ENCODE measurements at regions of chr12 and their contacts with region 1.

Region 1: DNA sequence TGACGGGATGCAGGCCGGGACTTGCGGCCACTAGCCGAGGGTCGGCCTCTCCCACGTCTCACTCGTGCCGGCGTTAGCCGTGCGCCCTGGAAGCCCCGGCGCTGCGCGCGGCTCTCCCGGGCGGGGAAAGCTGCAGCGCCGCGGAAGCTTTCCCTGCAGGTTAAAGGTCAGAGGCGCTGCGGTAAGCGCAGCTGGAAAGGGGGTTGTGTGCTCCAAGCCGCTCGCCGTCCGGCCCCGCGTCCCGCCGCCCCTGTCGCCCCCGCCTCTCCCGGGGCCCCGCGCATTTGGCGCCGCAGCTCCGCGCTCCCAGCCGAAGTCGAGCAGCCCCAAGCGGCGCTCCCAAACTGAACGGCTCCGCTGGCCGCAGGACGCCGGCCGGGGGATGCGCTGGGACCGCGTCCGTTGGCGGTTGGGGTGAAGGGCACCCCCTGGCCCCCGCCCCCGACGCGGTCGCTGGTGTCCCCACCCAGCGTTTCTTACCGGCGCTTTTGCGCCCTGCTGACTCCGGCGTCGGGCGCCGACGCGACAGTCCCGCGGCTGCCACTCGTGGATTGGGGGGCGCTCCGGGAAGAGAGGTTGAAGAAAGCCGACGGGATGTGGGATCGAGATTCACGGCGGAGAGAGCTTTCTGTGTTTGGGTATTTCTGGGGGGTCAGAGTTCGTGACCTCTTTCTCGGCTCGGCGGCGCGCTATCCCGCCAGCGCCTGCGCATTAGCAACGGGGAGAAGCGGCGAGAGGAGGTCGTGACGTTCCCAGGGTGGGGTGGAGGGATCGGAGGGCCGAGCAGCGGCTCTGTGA is at the start of gene NR2C1:
- DNase-seq: peak; percentile 85 to 97 (median 90)
- ATAC-seq: peak; percentile 98
- H3K4me3 ChIP-seq: peak within 1 kb of the TSS; percentile 84
- H3K4me3 Mint-ChIP-seq: peak within 1 kb of the TSS; percentile 98
- H3K27ac ChIP-seq: peak within 1 kb of the TSS; percentile 62 to 72
- H3K27ac Mint-ChIP-seq: peak within 1 kb of the TSS; percentile 89
- H3K4me1 ChIP-seq: peaks cover 17% of the 10 kb centered on the region
- H3K4me1 Mint-ChIP-seq: peaks cover 23% of the 10 kb centered on the region
- H3K27me3 ChIP-seq: no peaks in the 10 kb centered on the region
- H3K27me3 Mint-ChIP-seq: no peaks in the 10 kb centered on the region
- CTCF ChIP-seq: no peak
- total RNA-seq, gene NR2C1: 48.3 to 58.9 TPM

Region 2: DNA sequence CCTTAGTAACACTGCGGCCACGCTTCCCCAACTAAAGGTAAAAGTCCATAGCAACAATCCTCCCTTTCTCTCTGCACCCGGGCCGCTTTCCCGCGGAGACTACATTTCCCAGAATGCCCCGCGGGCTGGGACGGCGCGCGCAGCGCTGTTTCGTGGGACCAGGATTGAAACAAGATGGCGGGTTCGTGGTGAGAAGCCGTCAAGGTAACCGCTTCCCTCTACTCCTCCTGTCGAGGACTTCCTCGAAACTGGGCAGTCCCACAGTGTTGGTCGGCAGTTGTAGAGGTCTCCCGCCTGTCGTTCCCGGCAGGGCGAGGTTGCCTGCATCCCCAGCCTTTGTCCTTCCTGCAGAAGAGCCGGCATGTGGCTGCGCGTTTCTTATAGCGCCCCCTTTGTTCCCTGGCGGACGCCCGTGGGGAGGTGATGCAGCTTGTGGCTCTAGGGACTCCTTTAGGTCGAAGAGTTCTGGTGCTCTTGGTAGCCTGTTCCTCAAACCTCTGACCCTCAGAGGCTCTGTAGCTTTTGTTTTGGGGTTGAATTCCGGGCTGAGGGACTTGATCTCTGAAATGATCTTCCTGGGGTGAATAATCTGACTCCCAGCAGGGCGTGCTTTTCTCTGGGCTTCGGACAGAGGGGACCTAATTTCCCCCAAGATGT is 1605.6 kb before region 1 on chr12 and contains the start of gene MRPL42:
- CTCF ChIA-PET with region 1: interaction called, 3 read pairs
- POLR2A ChIA-PET with region 1: no interaction called
- intact Hi-C with region 1: loop called in 1 of 2 experiments (anchors 10 kb)
- DNase-seq: peak; percentile 84 to 94 (median 92)
- ATAC-seq: peak; percentile 95
- H3K4me3 ChIP-seq: peak within 1 kb of the TSS; percentile 92
- H3K4me3 Mint-ChIP-seq: peak within 1 kb of the TSS; percentile 92
- H3K27ac ChIP-seq: peak within 1 kb of the TSS; percentile 77 to 93
- H3K27ac Mint-ChIP-seq: peak within 1 kb of the TSS; percentile 95
- H3K4me1 ChIP-seq: peaks cover 25% of the 10 kb centered on the region
- H3K4me1 Mint-ChIP-seq: peaks cover 40% of the 10 kb centered on the region
- H3K27me3 ChIP-seq: no peaks in the 10 kb centered on the region
- H3K27me3 Mint-ChIP-seq: no peaks in the 10 kb centered on the region
- CTCF ChIP-seq: peak; percentile 82
- total RNA-seq, gene MRPL42: 39.0 to 39.3 TPM

Region 3: GRCh38 chr12:93670104-93670503 is 1403.0 kb before region 1 on chr12:
- CTCF ChIA-PET with region 1: no interaction called
- POLR2A ChIA-PET with region 1: no interaction called
- intact Hi-C with region 1: loop called in 1 of 2 experiments (anchors 5 kb)
- DNase-seq: no peak
- ATAC-seq: no peak
- H3K4me3 ChIP-seq: no peak overlapping the region
- H3K4me3 Mint-ChIP-seq: no peak overlapping the region
- H3K27ac ChIP-seq: no peak overlapping the region
- H3K27ac Mint-ChIP-seq: no peak overlapping the region
- H3K4me1 ChIP-seq: no peaks in the 10 kb centered on the region
- H3K4me1 Mint-ChIP-seq: no peaks in the 10 kb centered on the region
- H3K27me3 ChIP-seq: peaks cover 7 to 9% of the 10 kb centered on the region in 2 experiments
- H3K27me3 Mint-ChIP-seq: peaks cover 23% of the 10 kb centered on the region
- CTCF ChIP-seq: no peak

Region 4: GRCh38 chr12:94603434-94604365 is 469.4 kb before region 1 on chr12:
- CTCF ChIA-PET with region 1: no interaction called
- POLR2A ChIA-PET with region 1: no interaction called
- intact Hi-C with region 1: loop called in 1 of 2 experiments (anchors 5 kb)
- DNase-seq: peak; percentile 26 to 74 (median 40)
- ATAC-seq: no peak
- H3K4me3 ChIP-seq: no peak overlapping the region
- H3K4me3 Mint-ChIP-seq: no peak overlapping the region
- H3K27ac ChIP-seq: no peak overlapping the region
- H3K27ac Mint-ChIP-seq: no peak overlapping the region
- H3K4me1 ChIP-seq: no peaks in the 10 kb centered on the region
- H3K4me1 Mint-ChIP-seq: no peaks in the 10 kb centered on the region
- H3K27me3 ChIP-seq: peaks cover 0 to 5% of the 10 kb centered on the region in 2 experiments
- H3K27me3 Mint-ChIP-seq: peaks cover 5% of the 10 kb centered on the region
- CTCF ChIP-seq: peak; percentile 66

Region 5: DNA sequence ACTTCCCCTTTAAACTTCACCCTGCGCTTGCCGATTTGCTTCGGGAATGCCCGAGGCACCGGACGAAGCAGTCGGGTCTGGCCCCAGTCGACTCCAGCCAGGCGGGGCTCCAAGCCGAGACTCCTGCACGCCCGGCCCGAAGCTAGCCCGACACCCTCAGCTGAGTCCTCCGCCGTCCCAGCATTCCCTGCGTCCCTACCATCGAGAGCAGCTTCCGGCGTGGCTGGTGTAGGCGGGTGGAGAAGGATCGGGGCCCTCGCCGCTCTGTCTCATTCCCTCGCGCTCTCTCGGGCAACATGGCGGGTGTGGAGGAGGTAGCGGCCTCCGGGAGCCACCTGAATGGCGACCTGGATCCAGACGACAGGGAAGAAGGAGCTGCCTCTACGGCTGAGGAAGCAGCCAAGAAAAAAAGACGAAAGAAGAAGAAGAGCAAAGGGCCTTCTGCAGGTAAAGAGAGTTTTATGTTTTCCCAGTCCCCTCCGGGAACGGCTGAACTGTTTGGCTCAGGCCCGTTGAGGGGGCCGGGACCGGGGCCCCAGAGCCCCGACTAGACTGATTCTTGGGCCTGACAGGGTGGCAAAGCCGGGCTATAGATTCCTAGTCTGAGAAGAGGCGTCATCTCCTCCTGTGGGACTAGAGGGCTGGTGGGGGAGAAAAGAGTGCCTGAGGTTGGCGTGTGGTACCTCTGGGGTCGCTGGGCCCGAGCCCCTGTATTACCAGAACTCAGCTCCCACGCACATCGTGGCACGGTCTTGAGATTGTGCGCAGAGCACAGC is 401.0 kb after region 1 on chr12 and contains the start of gene METAP2:
- CTCF ChIA-PET with region 1: interaction called, 16 read pairs
- POLR2A ChIA-PET with region 1: interaction called, 32 read pairs
- intact Hi-C with region 1: loop called in 1 of 2 experiments (anchors 2 kb)
- DNase-seq: peak; percentile 82 to 95 (median 88)
- ATAC-seq: peak; percentile 96
- H3K4me3 ChIP-seq: peak within 1 kb of the TSS; percentile 92
- H3K4me3 Mint-ChIP-seq: peak within 1 kb of the TSS; percentile 100
- H3K27ac ChIP-seq: peak within 1 kb of the TSS; percentile 56 to 79
- H3K27ac Mint-ChIP-seq: peak within 1 kb of the TSS; percentile 92
- H3K4me1 ChIP-seq: peaks cover 32% of the 10 kb centered on the region
- H3K4me1 Mint-ChIP-seq: peaks cover 67% of the 10 kb centered on the region
- H3K27me3 ChIP-seq: no peaks in the 10 kb centered on the region
- H3K27me3 Mint-ChIP-seq: no peaks in the 10 kb centered on the region
- CTCF ChIP-seq: no peak
- total RNA-seq, gene METAP2: 60.2 to 66.3 TPM

Measured in CD4-positive, alpha-beta T cell (primary cell).